ENCODE measurements at regions of chr2 and their contacts with region 1.

Region 1: GRCh38 chr2:96336104-96336775 is 674 bp downstream of the NCAPH start:
- DNase-seq: no peak
- H3K4me3 ChIP-seq: peak overlapping the region; percentile 42 to 75
- H3K4me3 Mint-ChIP-seq: peak overlapping the region; percentile 66 to 89 (median 80)
- H3K27ac ChIP-seq: peak overlapping the region; percentile 86
- H3K27ac Mint-ChIP-seq: peak overlapping the region; percentile 60 to 94 (median 84)
- H3K4me1 ChIP-seq: peaks cover 35% of the 10 kb centered on the region
- H3K4me1 Mint-ChIP-seq: peaks cover 22 to 48% (median 31%) of the 10 kb centered on the region in 4 donors
- H3K27me3 ChIP-seq: no peaks in the 10 kb centered on the region
- H3K27me3 Mint-ChIP-seq: no peaks in the 10 kb centered on the region

Region 2: DNA sequence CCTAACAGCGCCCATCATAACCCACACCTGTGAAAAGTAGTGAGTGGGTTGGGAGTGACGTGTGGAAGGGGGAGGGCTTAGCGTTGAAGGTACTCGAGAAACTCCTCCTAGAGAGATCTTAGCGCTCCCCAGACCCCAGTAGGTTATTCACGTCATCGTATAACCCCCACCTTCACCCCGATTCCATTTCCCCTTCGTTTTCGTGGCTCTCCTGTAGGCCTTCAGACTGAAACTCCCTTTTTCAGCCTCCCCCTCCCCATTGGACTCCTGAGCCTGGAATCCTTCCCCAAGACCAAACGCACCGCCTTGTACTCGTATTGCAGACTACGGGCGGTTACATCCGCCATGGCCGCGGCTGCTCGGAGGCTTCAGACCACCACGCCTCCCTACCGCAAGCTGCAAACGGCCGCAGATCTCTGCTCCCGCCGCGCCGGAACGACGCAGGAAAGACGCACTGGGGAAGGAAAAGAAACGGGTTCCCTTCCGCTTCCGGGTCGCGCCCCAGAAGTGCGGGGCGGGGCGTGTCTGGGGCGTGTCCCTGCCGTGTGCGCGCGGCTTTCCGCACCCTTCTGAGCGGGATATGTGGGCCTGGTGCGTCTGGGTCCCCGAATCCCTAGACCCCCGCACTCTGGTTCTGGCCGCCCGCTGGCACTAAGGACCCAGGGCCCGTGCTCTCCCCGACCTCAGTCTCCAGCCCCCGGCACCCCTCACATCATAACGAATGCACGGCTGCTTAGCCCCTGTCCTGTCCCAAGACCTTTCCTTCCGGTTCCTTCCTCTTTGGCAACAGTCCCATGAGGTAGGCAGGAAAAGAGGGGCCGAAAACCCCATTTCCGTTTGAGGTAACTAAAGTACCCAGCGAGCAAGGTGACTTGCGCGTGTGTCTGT is 30.9 kb before region 1 on chr2 and contains the start of gene SNRNP200:
- CTCF ChIA-PET with region 1: no interaction called
- POLR2A ChIA-PET with region 1: interaction called, 34 read pairs
- intact Hi-C with region 1: no loop called
- DNase-seq: peak; percentile 91 to 95 (median 91)
- H3K4me3 ChIP-seq: peak within 1 kb of the TSS; percentile 80 to 99
- H3K4me3 Mint-ChIP-seq: peak within 1 kb of the TSS; percentile 97 to 100 (median 99)
- H3K27ac ChIP-seq: peak within 1 kb of the TSS; percentile 89
- H3K27ac Mint-ChIP-seq: peak within 1 kb of the TSS; percentile 98 to 100 (median 100)
- H3K4me1 ChIP-seq: peaks cover 48% of the 10 kb centered on the region
- H3K4me1 Mint-ChIP-seq: peaks cover 44 to 65% (median 54%) of the 10 kb centered on the region in 4 donors
- H3K27me3 ChIP-seq: no peaks in the 10 kb centered on the region
- H3K27me3 Mint-ChIP-seq: no peaks in the 10 kb centered on the region
- total RNA-seq, gene SNRNP200: 225 to 227 TPM

Region 3: DNA sequence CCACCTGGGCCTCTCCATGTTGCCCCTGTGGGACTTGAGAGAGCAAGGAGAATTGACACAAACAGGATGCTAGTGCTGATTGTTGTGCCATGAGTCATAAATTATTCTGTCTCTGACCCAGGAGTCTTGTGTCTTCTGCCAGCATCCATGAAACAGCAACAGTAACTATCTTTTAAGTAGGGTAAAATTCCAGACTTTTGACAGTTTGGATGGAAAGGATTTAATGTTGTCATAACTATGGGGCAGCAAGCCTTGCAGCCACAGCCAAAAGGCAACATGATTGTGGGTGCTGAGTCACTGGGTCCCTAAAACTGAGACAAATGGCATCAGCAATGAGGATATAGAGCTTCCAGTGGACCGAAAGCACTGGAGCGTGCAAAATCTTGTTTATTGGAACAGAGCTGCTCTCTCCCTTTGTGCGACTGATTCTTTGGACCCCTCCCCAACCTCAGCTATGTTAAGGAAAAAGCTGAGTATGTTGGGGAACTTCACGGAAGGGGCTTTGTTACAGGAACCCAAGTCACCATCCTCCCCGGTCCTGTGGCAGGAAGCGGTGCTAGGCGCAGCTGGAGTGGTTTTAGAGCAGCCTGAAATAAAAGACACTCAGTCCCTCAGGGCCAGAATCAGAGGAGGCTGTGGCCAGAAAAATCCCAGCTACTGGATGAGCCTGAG is 20.7 kb before region 1 on chr2:
- CTCF ChIA-PET with region 1: interaction called, 9 read pairs
- POLR2A ChIA-PET with region 1: interaction called, 178 read pairs
- intact Hi-C with region 1: no loop called
- DNase-seq: peak in 3 of 5 donors; percentile 22 to 49 (median 28)
- H3K4me3 ChIP-seq: no peak overlapping the region
- H3K4me3 Mint-ChIP-seq: peak overlapping the region; percentile 49 to 80 (median 72)
- H3K27ac ChIP-seq: peak overlapping the region; percentile 45
- H3K27ac Mint-ChIP-seq: peak overlapping the region; percentile 71 to 91 (median 86)
- H3K4me1 ChIP-seq: peaks cover 44% of the 10 kb centered on the region
- H3K4me1 Mint-ChIP-seq: peaks cover 27 to 51% (median 40%) of the 10 kb centered on the region in 4 donors
- H3K27me3 ChIP-seq: no peaks in the 10 kb centered on the region
- H3K27me3 Mint-ChIP-seq: no peaks in the 10 kb centered on the region

Region 4: GRCh38 chr2:96320728-96321622 is 15.3 kb before region 1 on chr2:
- CTCF ChIA-PET with region 1: interaction called, 9 read pairs
- POLR2A ChIA-PET with region 1: interaction called, 178 read pairs
- intact Hi-C with region 1: loop called (anchors 1 kb)
- DNase-seq: peak in 2 of 5 donors; percentile 5 to 6
- H3K4me3 ChIP-seq: peak overlapping the region; percentile 76 to 77
- H3K4me3 Mint-ChIP-seq: peak overlapping the region; percentile 88 to 95 (median 92)
- H3K27ac ChIP-seq: peak overlapping the region; percentile 72
- H3K27ac Mint-ChIP-seq: peak overlapping the region; percentile 50 to 97 (median 89)
- H3K4me1 ChIP-seq: peaks cover 64% of the 10 kb centered on the region
- H3K4me1 Mint-ChIP-seq: peaks cover 37 to 75% (median 59%) of the 10 kb centered on the region in 4 donors
- H3K27me3 ChIP-seq: no peaks in the 10 kb centered on the region
- H3K27me3 Mint-ChIP-seq: no peaks in the 10 kb centered on the region

Region 5: DNA sequence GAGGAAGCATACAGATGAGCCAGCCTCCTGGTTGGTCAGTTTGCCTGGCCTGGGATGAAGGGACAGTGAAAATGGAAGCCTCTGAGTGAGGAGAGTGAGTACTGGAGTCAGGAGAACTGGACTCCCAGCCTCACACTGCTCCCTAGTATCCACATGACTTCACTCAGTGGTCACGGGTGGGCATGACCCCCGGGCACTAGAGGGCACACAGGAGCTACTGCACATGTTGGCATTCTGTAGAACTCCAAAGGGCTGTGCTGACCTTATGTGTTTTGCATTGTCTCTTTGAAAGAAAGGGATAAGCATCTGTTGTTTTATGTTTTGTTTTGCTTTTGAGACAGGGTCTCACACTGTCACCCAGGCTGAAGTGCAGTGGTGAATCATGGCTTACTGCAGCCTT is 23.1 kb after region 1 on chr2:
- CTCF ChIA-PET with region 1: interaction called, 11 read pairs
- POLR2A ChIA-PET with region 1: interaction called, 3 read pairs
- intact Hi-C with region 1: no loop called
- DNase-seq: peak in 4 of 5 donors; percentile 22 to 41 (median 38)
- H3K4me3 ChIP-seq: no peak overlapping the region
- H3K4me3 Mint-ChIP-seq: no peak overlapping the region
- H3K27ac ChIP-seq: peak overlapping the region; percentile 2
- H3K27ac Mint-ChIP-seq: peak overlapping the region; percentile 69 to 97 (median 93)
- H3K4me1 ChIP-seq: peaks cover 21% of the 10 kb centered on the region
- H3K4me1 Mint-ChIP-seq: peaks cover 13 to 20% (median 14%) of the 10 kb centered on the region in 4 donors
- H3K27me3 ChIP-seq: no peaks in the 10 kb centered on the region
- H3K27me3 Mint-ChIP-seq: no peaks in the 10 kb centered on the region